Activated T-helper 1 cell treated with anti-CD3 and anti-CD28 coated beads, Interleukin-12 subunit alpha, Interleukin-12 subunit beta, Interleukin-2, Interleukin-4 antibody, amounts not matched to agents 30 ng/mL and 10 ng/mL and 1 ng/mL, durations not matched to agents 14 hours and 24 hours and 36 hours (primary cell): ENCODE measurements at regions of chr11 and their contacts with region 1.

Region 1: GRCh38 chr11:3807909-3808860 is at the start of gene PGAP2:
- DNase-seq: peak; percentile 55
- H3K4me3 Mint-ChIP-seq: peak within 1 kb of the TSS; percentile 99
- H3K27ac Mint-ChIP-seq: peak within 1 kb of the TSS; percentile 91
- H3K4me1 Mint-ChIP-seq: peaks cover 22% of the 10 kb centered on the region
- H3K27me3 Mint-ChIP-seq: no peaks in the 10 kb centered on the region
- total RNA-seq, gene PGAP2: 29.8 and 30.1 TPM in 2 replicates

Region 2: DNA sequence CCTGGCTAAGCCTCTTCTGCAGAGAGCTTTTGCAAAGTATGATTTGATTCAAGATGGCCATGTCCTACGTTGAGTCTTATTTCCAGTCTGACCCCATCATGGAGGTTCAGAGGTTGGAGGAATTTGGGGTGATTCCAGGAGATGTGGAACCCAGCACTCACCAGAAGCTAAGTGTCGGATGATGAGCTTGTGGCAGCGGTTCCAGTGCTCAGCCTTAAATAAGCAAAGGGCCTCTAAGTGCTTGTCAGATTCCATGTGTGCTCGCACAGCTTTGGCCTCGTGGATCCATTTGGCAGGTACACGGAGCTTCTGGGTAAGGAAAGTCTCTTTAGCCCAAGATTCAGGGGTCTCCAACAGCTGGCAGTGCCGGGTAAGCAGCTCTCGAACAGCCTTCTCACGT is 125.1 kb before region 1 on chr11:
- intact Hi-C with region 1: loop called (anchors 5 kb)
- DNase-seq: no peak
- H3K4me3 Mint-ChIP-seq: no peak overlapping the region
- H3K27ac Mint-ChIP-seq: no peak overlapping the region
- H3K4me1 Mint-ChIP-seq: peaks cover 9% of the 10 kb centered on the region
- H3K27me3 Mint-ChIP-seq: no peaks in the 10 kb centered on the region

Region 3: DNA sequence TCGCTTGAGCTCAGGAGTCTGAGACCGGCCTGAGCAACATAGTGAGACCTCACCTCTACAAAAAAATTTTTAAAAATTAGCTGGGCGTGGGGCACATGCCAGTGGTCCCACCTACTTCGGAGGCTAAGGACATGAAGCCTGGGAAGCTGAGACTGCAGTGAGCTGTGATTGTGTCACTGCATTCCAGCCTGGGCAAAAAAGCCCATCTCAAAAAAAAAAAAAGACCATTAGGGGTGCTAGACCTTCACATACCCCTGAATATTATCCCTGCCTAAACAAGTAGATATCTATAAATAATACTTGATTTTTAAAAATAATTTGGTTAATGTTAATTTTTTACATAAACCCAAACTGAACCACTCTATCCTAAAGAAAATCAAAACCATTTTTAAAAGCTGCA is 35.0 kb before region 1 on chr11:
- intact Hi-C with region 1: loop called (anchors 5 kb)
- DNase-seq: no peak
- H3K4me3 Mint-ChIP-seq: no peak overlapping the region
- H3K27ac Mint-ChIP-seq: no peak overlapping the region
- H3K4me1 Mint-ChIP-seq: peaks cover under 1% of the 10 kb centered on the region
- H3K27me3 Mint-ChIP-seq: no peaks in the 10 kb centered on the region

Region 4: DNA sequence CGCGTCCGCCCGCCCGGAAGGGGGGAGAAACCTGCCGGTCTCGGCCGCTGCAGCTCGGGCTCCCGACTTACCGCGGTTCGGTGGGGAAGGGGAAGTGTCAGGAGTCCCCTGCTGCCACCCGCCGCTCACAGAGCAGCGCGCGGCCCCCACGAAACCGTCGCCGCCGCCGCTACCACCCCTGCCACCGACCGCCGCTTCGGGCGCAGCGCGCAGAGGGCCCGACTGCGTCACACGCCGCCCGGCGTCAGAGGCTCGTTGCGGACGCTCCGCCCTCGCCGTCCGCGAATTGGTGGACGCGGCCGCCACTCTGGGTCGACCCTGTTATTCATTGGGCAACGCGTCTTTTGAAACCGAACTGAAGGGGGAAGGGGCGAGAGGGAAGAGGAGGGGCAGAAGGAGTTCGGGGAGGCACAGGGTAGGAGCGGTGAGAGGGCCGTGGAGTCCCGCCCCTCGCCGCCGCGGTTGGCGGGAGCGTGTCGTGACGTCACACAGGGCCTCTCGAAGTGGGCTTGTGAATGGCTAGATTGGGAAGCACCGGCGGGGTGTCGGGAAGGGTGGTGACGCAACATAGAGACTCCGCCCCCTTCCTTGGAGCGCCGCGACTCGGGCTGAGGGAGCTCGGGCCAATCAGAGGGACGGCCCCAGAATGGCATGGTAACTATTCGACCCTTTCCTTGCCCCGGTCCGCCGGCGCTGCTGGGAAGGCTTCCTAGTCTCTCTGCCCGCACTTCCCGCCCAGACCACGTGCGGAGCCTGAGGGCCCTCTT is 10.7 kb before region 1 on chr11 and contains the start of gene NUP98:
- intact Hi-C with region 1: loop called (anchors 1 kb)
- DNase-seq: peak; percentile 100
- H3K4me3 Mint-ChIP-seq: peak within 1 kb of the TSS; percentile 99
- H3K27ac Mint-ChIP-seq: peak within 1 kb of the TSS; percentile 95
- H3K4me1 Mint-ChIP-seq: peaks cover 35% of the 10 kb centered on the region
- H3K27me3 Mint-ChIP-seq: no peaks in the 10 kb centered on the region
- total RNA-seq, gene NUP98: 122 and 123 TPM in 2 replicates

Region 5: GRCh38 chr11:3834664-3835461 is 26.7 kb after region 1 on chr11:
- intact Hi-C with region 1: no loop called
- DNase-seq: no peak
- H3K4me3 Mint-ChIP-seq: peak overlapping the region; percentile 96
- H3K27ac Mint-ChIP-seq: peak overlapping the region; percentile 79
- H3K4me1 Mint-ChIP-seq: peaks cover 81% of the 10 kb centered on the region
- H3K27me3 Mint-ChIP-seq: no peaks in the 10 kb centered on the region

Region 6: GRCh38 chr11:4072668-4073285 is 264.6 kb after region 1 on chr11:
- intact Hi-C with region 1: loop called (anchors 1 kb)
- DNase-seq: peak; percentile 45
- H3K4me3 Mint-ChIP-seq: no peak overlapping the region
- H3K27ac Mint-ChIP-seq: no peak overlapping the region
- H3K4me1 Mint-ChIP-seq: peaks cover 29% of the 10 kb centered on the region
- H3K27me3 Mint-ChIP-seq: no peaks in the 10 kb centered on the region